Activated CD4-positive, alpha-beta memory T cell treated with anti-CD3 and anti-CD28 coated beads for 36 hours (primary cell): ENCODE measurements at regions of chr1 and their contacts with region 1.

Region 1: GRCh38 chr1:20151906-20152598 is 12.9 kb downstream of the PLA2G2F start:
- DNase-seq: peak; percentile 84
- H3K4me3 Mint-ChIP-seq: peak overlapping the region; percentile 53
- H3K27ac Mint-ChIP-seq: no peak overlapping the region
- H3K4me1 Mint-ChIP-seq: peaks cover 14% of the 10 kb centered on the region
- H3K27me3 Mint-ChIP-seq: peaks cover 3% of the 10 kb centered on the region

Region 2: DNA sequence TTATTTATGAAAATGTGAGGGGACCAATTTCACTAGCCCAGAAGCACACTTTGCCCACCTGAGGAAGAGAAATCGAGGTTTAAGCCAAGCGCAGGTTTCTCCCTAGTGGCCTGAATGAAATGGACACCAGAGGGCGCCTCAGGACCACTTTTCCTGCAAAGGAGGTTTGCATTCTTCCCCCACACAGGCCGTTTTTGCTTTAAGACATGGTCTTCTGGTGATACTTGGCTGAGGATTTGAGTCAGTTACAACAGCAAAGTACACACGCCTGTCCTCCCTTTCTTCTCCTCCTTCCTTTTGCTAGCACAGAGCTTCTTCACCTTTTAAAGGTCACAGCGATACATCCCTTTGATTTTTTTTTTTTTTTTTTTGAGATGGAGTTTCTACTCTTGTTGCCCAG is 234.0 kb before region 1 on chr1:
- CTCF ChIA-PET with region 1: interaction called, 52 read pairs
- POLR2A ChIA-PET with region 1: no interaction called
- intact Hi-C with region 1: loop called (anchors 1 kb)
- DNase-seq: peak; percentile 86
- H3K4me3 Mint-ChIP-seq: no peak overlapping the region
- H3K27ac Mint-ChIP-seq: no peak overlapping the region
- H3K4me1 Mint-ChIP-seq: peaks cover 2% of the 10 kb centered on the region
- H3K27me3 Mint-ChIP-seq: no peaks in the 10 kb centered on the region

Region 3: DNA sequence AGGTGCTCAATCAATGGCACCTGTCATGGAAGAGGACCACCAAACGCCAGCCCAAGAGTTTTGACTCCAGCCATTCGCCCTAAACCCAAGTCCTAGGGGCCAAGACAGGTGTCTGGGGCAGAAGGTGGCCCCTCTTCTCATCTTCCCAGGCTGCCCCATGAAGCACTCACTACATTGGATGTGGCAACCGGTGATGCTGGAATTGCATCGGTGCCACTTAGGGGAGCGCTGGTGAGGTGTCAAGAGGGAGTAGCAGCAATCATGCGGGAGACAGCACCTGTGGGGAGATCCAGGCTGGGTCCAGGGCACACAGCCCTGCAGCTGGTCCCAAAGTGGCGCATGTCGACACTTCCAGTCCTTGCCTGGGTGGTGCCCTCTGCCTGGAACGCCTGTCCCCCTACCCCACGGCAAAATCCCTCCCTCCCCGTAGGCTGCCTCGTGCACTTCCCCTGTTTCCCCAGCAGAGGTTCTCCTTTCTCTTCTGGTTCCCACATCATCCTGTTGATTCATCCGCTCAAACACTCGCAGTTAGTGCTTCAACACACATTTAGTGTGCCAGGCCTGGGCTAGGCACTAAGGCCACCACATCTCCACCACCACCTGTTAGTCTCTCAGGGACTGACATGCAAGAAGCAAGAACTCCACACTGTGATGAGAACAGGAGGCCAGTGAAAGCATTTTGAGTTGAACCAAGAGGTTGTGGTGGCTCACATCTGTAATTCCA is 51.3 kb before region 1 on chr1:
- CTCF ChIA-PET with region 1: interaction called, 13 read pairs
- POLR2A ChIA-PET with region 1: no interaction called
- intact Hi-C with region 1: loop called (anchors 1 kb)
- DNase-seq: peak; percentile 51
- H3K4me3 Mint-ChIP-seq: no peak overlapping the region
- H3K27ac Mint-ChIP-seq: no peak overlapping the region
- H3K4me1 Mint-ChIP-seq: peaks cover 2% of the 10 kb centered on the region
- H3K27me3 Mint-ChIP-seq: peaks cover 3% of the 10 kb centered on the region

Region 4: GRCh38 chr1:20174937-20175666 is 23.1 kb after region 1 on chr1:
- CTCF ChIA-PET with region 1: interaction called, 11 read pairs
- POLR2A ChIA-PET with region 1: no interaction called
- intact Hi-C with region 1: no loop called
- DNase-seq: no peak
- H3K4me3 Mint-ChIP-seq: no peak overlapping the region
- H3K27ac Mint-ChIP-seq: no peak overlapping the region
- H3K4me1 Mint-ChIP-seq: peaks cover 16% of the 10 kb centered on the region
- H3K27me3 Mint-ChIP-seq: no peaks in the 10 kb centered on the region